Activated CD8-positive, alpha-beta T cell treated with anti-CD3 and anti-CD28 coated beads for 36 hours (primary cell): ENCODE measurements at regions of chr4 and their contacts with region 1.

Region 1: GRCh38 chr4:107183155-107183774 is 147.2 kb upstream of the DKK2 start:
- DNase-seq: peak; percentile 5
- ATAC-seq: peak; percentile 75
- H3K4me3 Mint-ChIP-seq: no peak overlapping the region
- H3K27ac Mint-ChIP-seq: no peak overlapping the region
- H3K4me1 Mint-ChIP-seq: no peaks in the 10 kb centered on the region
- H3K27me3 Mint-ChIP-seq: peaks cover 2% of the 10 kb centered on the region
- CTCF ChIP-seq: peak; percentile 75

Region 2: DNA sequence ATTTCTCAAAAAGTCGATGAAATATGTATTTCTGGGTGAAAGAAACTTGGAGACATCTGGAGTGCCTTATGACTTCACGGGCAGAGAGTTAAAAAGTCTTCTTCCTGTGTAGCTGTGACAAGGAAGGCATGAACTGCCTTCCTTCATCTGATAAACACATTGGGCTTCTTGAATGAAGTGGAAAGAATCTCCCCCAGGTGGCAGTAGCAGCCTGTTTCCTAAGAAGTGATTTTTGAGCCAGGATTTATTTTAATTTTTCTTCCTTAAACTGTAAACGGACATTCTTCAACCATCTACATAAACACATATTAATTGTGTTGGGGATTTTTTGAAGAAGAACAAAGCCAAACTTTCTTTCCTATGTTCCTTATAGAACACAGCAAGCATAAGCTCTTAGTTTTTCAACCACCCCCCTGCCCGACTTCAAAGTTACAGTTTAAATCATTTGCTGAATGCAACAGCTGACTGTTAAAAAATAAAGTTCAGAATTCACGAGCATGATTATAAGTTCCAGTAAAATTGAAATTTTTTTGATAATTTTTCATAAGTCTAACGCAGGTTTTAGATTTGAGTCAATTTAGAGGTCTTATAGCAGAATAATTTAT is 813.7 kb before region 1 on chr4:
- CTCF ChIA-PET with region 1: interaction called, 3 read pairs
- POLR2A ChIA-PET with region 1: no interaction called
- intact Hi-C with region 1: loop called (anchors 10 kb)
- DNase-seq: peak; percentile 56
- ATAC-seq: peak; percentile 60
- H3K4me3 Mint-ChIP-seq: no peak overlapping the region
- H3K27ac Mint-ChIP-seq: no peak overlapping the region
- H3K4me1 Mint-ChIP-seq: no peaks in the 10 kb centered on the region
- H3K27me3 Mint-ChIP-seq: peaks cover 24% of the 10 kb centered on the region
- CTCF ChIP-seq: peak; percentile 49

Region 3: DNA sequence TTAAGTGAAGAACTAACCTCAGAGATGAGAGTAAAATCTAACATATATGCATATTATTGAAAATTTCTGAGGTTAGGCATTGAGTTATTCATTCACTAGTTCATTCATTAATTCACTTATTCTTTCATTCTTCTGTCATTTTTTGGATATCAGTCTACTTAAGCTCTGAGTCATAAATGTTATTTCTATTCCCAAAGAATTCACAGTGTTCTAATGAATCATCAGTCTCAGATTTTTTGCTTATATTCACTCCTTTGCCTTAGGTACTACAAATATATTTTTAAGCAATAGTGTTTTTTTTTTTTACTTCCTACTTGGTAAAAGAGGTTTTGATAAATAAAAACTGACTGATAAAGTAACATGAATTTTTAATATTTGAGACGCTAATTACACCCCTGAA is 52.0 kb before region 1 on chr4:
- CTCF ChIA-PET with region 1: no interaction called
- POLR2A ChIA-PET with region 1: no interaction called
- intact Hi-C with region 1: no loop called
- DNase-seq: no peak
- ATAC-seq: no peak
- H3K4me3 Mint-ChIP-seq: no peak overlapping the region
- H3K27ac Mint-ChIP-seq: no peak overlapping the region
- H3K4me1 Mint-ChIP-seq: no peaks in the 10 kb centered on the region
- H3K27me3 Mint-ChIP-seq: peaks cover 2% of the 10 kb centered on the region
- CTCF ChIP-seq: no peak

Region 4: GRCh38 chr4:107164962-107165475 is 18.2 kb before region 1 on chr4:
- CTCF ChIA-PET with region 1: no interaction called
- POLR2A ChIA-PET with region 1: no interaction called
- intact Hi-C with region 1: no loop called
- DNase-seq: no peak
- ATAC-seq: no peak
- H3K4me3 Mint-ChIP-seq: no peak overlapping the region
- H3K27ac Mint-ChIP-seq: no peak overlapping the region
- H3K4me1 Mint-ChIP-seq: no peaks in the 10 kb centered on the region
- H3K27me3 Mint-ChIP-seq: no peaks in the 10 kb centered on the region
- CTCF ChIP-seq: no peak

Region 5: DNA sequence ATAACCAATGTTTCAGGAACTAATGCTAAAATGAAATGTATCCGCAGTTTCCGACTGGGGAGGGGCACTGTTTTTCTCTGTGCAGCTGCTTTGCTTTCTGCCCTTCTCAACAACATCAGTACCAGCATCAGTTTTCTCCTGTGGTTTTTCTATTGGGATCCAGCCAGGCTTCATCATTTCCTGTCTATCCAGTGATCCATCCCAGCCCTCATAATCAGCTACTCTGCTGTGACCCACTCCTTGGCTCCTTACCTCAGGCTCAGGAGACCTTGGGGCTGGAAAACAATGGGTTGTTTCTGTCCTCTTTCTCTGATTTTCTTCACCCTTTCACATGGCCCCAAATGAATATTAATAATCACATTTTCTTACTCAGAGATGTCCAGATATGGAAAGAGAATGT is 75.1 kb after region 1 on chr4:
- CTCF ChIA-PET with region 1: no interaction called
- POLR2A ChIA-PET with region 1: no interaction called
- intact Hi-C with region 1: no loop called
- DNase-seq: no peak
- ATAC-seq: no peak
- H3K4me3 Mint-ChIP-seq: no peak overlapping the region
- H3K27ac Mint-ChIP-seq: no peak overlapping the region
- H3K4me1 Mint-ChIP-seq: no peaks in the 10 kb centered on the region
- H3K27me3 Mint-ChIP-seq: no peaks in the 10 kb centered on the region
- CTCF ChIP-seq: no peak